Activated T-helper 2 cell treated with anti-CD3 and anti-CD28 coated beads, Interferon-gamma antibody, Interleukin-2, Interleukin-4, amounts not matched to agents 10 μg/mL and 5 μg/mL and 100 μg/mL, durations not matched to agents 14 hours and 24 hours and 36 hours (primary cell): ENCODE measurements at regions of chr15 and their contacts with region 1.

Region 1: DNA sequence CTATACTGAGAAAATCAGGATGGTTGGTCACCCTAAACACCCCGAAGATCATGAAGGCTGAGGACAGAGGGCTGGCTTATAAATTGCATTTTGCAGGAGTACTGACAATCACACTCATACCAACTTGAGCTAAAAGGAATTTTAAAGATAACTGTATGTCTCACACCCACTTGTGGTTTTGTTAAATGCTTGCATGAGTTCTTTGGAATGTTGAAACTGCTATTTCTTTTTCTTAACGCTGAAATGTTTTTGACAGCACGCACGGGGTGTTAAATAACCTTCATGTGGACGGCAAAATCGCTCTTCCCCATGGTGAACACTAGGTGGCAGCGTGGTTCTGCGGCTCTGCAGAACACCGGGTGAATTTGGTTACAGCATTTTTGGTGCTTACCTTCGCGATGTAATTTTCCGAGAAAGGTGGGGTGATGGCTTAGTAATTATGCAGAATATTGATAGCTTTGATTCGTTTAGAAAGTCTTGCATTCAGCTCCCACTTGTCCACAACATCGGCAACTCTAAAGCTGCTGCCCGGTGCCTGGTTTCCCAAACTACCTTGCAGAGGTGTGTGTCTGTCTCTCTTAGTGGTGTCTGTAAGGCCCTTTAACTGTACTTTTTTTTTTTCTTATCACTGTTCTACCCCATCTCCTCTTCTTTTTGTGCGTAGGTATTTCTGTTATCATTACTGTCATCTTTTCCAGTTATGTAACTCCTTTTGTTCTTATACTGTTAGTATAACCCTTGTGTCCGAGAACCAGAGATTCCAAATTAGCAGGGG is 51.7 kb downstream of the ARNT2 start:
- DNase-seq: peak; percentile 41
- H3K4me3 Mint-ChIP-seq: no peak overlapping the region
- H3K27ac Mint-ChIP-seq: no peak overlapping the region
- H3K4me1 Mint-ChIP-seq: peaks cover 6% of the 10 kb centered on the region
- H3K27me3 Mint-ChIP-seq: peaks cover 15% of the 10 kb centered on the region

Region 2: DNA sequence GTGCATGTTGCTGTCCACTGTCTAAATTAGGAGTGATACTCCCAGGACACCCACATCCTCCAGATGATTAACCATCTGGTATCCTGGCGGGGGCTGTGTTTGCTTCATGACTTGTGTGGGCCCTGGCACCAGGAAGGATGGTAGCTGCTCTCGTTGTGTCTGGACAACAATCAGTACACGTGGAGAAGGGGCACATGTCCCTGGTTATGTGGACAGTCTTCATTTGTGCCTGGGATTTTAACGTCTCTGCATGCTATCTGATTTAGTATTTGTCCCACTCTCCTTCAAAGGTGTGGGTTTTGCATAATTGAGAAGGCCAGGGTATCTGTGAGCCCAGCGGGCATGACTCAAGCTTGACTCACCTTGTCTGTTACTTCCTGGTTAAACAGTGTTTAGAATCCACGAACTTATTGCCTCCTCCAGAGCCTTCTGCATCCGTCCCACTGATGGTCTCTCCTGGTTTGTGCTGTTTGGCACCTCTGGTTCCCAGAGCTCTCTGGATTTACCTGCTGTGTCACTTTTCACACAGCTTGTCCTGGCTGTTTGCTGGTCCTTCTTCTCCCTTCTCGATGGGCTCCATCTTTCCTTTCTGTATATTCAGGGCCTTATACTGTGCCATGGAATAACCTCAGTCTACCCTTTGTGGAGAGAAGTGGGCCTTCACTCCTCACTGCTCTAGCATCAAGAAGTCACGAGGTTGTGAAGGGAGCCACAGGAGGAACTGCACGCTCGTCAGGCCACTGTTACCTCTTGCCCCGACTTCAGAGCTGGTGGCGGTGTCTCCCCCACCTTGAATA is 19.1 kb before region 1 on chr15:
- intact Hi-C with region 1: no loop called
- DNase-seq: no peak
- H3K4me3 Mint-ChIP-seq: no peak overlapping the region
- H3K27ac Mint-ChIP-seq: no peak overlapping the region
- H3K4me1 Mint-ChIP-seq: no peaks in the 10 kb centered on the region
- H3K27me3 Mint-ChIP-seq: peaks cover 9% of the 10 kb centered on the region

Region 3: DNA sequence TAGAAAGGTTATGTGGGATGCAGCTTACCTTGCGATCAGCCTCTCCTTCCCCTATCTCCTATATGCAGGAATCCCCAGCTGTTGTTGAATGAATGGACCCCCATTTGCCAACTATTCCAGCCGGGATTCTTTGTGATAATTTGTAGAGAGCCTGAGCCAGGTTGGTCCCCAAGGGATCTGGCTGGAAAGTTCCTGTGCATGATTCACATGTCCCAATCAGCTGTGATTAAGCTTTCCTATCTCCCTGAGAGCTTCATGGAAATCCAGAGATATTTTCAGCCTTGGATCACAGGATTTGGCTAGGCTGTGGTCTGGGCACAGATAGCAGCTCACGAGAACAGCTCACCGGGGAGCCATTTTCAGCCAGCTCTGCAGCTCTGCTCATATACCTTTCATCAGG is 25.1 kb after region 1 on chr15:
- intact Hi-C with region 1: no loop called
- DNase-seq: no peak
- H3K4me3 Mint-ChIP-seq: no peak overlapping the region
- H3K27ac Mint-ChIP-seq: no peak overlapping the region
- H3K4me1 Mint-ChIP-seq: no peaks in the 10 kb centered on the region
- H3K27me3 Mint-ChIP-seq: peaks cover 5% of the 10 kb centered on the region

Region 4: DNA sequence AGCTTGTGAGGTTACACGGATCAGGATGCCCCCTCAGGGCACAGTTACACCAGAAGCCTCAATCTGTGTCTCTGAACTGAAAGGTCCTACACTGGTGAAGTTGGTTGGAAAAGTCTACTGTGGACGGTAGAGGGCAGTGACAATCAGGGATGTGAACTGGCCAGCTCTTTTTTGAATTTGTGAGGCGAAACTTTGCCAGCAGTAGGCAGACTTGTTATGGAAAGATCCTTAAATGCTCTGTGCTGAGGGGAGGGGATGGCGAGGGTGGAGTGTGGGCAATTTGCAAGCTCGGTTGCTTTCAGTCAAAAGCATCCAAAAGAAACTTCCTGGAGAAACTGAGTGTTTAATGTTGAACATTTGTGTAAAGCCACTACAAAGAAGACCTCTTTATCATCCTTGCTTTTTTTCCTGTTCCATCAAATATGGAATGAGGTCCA is 111.9 kb after region 1 on chr15:
- intact Hi-C with region 1: loop called (anchors 10 kb)
- DNase-seq: no peak
- H3K4me3 Mint-ChIP-seq: no peak overlapping the region
- H3K27ac Mint-ChIP-seq: no peak overlapping the region
- H3K4me1 Mint-ChIP-seq: no peaks in the 10 kb centered on the region
- H3K27me3 Mint-ChIP-seq: peaks cover 10% of the 10 kb centered on the region

Region 5: DNA sequence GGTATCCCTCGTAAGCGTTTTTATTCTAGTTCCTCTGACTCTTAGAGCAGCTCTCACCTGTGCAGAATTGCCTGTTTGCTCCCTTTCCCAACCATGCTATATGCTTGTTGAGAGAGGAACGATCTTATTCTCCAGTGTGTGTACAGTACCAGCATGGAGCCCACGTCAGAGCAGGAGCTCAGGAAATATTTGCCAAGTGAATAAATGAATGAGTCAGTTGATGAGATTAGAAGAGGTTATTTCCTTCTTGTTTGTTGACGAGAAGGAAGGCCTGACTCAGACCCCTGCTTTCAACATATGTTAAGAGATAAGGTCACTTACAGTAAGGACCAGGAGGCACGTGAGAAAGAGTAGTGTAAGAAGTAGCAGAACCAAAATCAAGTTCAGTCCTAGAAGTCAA is 132.9 kb after region 1 on chr15:
- intact Hi-C with region 1: no loop called
- DNase-seq: no peak
- H3K4me3 Mint-ChIP-seq: no peak overlapping the region
- H3K27ac Mint-ChIP-seq: no peak overlapping the region
- H3K4me1 Mint-ChIP-seq: peaks cover 3% of the 10 kb centered on the region
- H3K27me3 Mint-ChIP-seq: peaks cover 1% of the 10 kb centered on the region

Region 6: DNA sequence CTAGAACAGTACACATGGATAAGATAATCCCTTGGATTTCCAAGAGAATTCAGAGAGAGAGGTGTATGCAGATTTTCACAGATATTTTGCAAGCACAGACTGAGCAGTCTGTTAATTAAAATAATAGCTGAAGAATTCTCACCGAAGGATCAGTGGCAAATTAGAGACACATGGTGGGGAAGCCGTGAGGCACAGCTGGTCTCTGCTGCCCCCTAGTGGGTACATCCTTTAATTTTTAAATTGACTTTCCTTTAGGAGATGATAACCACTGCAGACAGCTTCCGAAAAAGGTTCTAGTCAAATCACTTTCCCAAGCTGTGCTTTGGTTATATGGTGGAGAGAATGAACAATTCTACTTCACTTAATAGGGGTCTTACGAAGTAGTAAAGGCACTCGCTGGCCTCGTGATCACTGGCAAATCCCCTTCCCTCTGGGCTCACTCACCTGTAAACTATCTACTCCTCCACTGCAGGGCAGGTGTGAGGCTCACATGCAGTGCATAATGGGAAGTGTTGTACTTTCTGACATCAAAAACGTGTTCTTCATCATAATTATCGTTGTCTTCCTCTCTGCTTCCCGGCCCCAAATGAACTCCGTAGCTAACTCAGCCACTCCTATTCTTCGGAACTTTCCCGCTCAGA is 514.3 kb after region 1 on chr15:
- intact Hi-C with region 1: loop called (anchors 1 kb)
- DNase-seq: peak; percentile 30
- H3K4me3 Mint-ChIP-seq: no peak overlapping the region
- H3K27ac Mint-ChIP-seq: no peak overlapping the region
- H3K4me1 Mint-ChIP-seq: peaks cover 2% of the 10 kb centered on the region
- H3K27me3 Mint-ChIP-seq: no peaks in the 10 kb centered on the region